HCT116 (cell line): ENCODE measurements at regions of chr12 and their contacts with region 1.

Region 1: GRCh38 chr12:66409195-66409871 is 107.0 kb downstream of the HELB start:
- DNase-seq: peak; percentile 57
- ATAC-seq: peak; percentile 92
- H3K4me3 ChIP-seq: no peak overlapping the region
- H3K27ac ChIP-seq: no peak overlapping the region
- H3K4me1 ChIP-seq: peaks cover 0 to 4% of the 10 kb centered on the region in 2 experiments; a peak in 1 of 4 replicates
- H3K27me3 ChIP-seq: no peaks in the 10 kb centered on the region
- CTCF ChIP-seq: peak; percentile 85 to 92 (median 86)
- POLR2A ChIP-seq: no peak
- RAD21 ChIP-seq: peak; percentile 88

Region 2: DNA sequence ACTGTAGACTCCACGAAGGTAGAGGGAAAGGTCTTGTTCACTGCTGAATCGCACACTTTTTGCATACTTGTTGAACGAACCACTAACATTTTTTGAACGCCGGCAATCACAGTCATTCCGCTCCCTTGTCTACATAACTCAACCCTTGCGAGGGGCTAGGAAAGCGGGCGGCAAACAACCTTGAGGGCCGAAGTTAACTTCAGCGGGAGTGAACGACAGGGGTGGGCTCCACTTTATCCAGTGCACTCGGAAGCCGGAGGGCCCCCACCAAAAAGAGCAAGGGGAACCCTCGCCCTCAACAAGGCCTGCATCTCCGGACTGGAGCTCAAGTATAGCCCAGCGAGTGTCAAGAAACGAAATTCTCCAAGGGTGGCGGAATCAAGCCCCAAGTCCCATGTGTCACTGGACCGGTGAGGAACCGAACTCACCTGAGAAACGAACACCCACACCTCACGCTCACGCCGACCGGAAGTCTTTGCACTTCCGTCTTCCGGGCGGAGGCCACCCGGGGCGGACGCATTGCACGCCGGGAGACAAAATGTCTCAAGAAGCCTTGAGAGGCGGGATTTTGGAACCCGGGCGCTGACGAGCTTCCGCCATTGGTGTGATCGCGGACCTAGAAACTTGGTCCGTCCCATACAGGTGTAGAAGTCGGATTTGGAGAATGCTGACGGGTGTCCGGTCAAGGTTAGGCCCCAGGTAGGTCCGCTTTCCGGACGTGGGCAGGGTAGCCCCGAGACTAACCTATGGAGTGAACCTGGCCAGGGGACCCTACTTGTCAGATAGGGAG is 278.9 kb before region 1 on chr12 and contains the start of gene LLPH:
- CTCF ChIA-PET with region 1: no interaction called
- POLR2A ChIA-PET with region 1: no interaction called
- RAD21 ChIA-PET with region 1: no interaction called
- intact Hi-C with region 1: loop called (anchors 5 kb)
- DNase-seq: peak; percentile 94
- ATAC-seq: peak; percentile 90
- H3K4me3 ChIP-seq: peak within 1 kb of the TSS; percentile 59 to 74
- H3K27ac ChIP-seq: peak within 1 kb of the TSS; percentile 65
- H3K4me1 ChIP-seq: peaks cover 15 to 29% of the 10 kb centered on the region in 2 experiments
- H3K27me3 ChIP-seq: no peaks in the 10 kb centered on the region
- CTCF ChIP-seq: no peak
- POLR2A ChIP-seq: peak; percentile 89
- RAD21 ChIP-seq: no peak
- total RNA-seq, gene LLPH: 45.6 TPM

Region 3: DNA sequence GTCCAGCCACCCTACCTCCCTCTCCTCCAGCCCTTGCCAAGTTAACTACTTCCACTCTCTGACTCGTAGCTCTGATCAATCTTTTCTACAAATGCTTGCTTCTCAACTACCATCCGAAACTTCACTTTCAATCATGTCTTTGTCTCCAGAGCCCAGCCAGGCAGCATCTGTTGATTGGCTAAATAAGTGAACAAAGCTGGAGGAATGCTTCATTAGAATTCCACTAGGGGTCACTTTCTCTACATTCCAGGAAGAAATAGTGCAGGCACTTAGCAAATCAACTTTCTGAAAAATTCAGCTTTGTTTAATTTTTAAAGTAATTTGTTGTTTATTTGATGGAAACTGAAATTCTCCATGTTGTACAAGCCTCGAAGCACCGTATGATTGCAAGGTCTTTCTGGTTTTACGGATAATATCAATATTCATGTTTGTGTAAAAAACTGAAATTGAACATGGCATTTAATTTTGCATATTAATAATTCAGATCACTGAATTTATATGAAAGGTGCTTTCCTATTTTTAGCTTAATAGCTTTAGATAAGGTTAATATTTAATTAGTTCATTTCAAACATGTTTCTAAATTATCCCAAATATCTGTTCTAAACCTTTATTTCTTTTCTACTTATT is 139.5 kb before region 1 on chr12:
- CTCF ChIA-PET with region 1: interaction called, 7 read pairs
- POLR2A ChIA-PET with region 1: no interaction called
- RAD21 ChIA-PET with region 1: no interaction called
- intact Hi-C with region 1: loop called (anchors 2 kb)
- DNase-seq: peak; percentile 45
- ATAC-seq: peak; percentile 90
- H3K4me3 ChIP-seq: no peak overlapping the region
- H3K27ac ChIP-seq: no peak overlapping the region
- H3K4me1 ChIP-seq: no peaks in the 10 kb centered on the region
- H3K27me3 ChIP-seq: no peaks in the 10 kb centered on the region
- CTCF ChIP-seq: peak; percentile 66 to 86 (median 77); a peak in 5 of 6 replicates
- POLR2A ChIP-seq: no peak
- RAD21 ChIP-seq: peak; percentile 71

Region 4: GRCh38 chr12:66279123-66279712 is 130.1 kb before region 1 on chr12:
- CTCF ChIA-PET with region 1: interaction called, 17 read pairs
- POLR2A ChIA-PET with region 1: no interaction called
- RAD21 ChIA-PET with region 1: no interaction called
- intact Hi-C with region 1: loop called (anchors 1 kb)
- DNase-seq: peak; percentile 33
- ATAC-seq: peak; percentile 92
- H3K4me3 ChIP-seq: no peak overlapping the region
- H3K27ac ChIP-seq: no peak overlapping the region
- H3K4me1 ChIP-seq: no peaks in the 10 kb centered on the region
- H3K27me3 ChIP-seq: 0 out of 2 replicates have a peak, but pooled peaks cover 4% of the 10 kb centered on the region
- CTCF ChIP-seq: peak; percentile 81 to 90 (median 89)
- POLR2A ChIP-seq: no peak
- RAD21 ChIP-seq: peak; percentile 74

Region 5: DNA sequence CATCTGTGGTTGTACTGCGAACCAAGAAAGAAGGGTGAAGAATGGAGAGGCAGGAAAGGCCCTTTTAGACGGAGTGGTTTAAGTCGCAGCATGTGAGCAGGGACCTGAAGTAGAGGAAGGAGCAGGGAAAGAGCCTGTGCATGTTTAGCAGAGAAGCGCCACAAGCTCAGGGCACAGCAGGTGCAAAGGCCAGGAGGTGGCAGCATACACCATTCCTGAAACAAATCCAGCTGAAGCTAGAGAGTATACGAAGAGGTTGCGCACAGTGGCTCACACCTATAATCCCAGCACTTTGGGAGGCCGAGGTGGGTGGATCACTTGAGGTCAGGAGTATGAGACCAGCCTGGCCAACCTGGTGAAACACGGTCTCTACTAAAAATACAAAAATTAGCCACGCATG is 57.1 kb before region 1 on chr12:
- CTCF ChIA-PET with region 1: interaction called, 8 read pairs
- POLR2A ChIA-PET with region 1: no interaction called
- RAD21 ChIA-PET with region 1: no interaction called
- intact Hi-C with region 1: loop called (anchors 1 kb)
- DNase-seq: peak; percentile 19
- ATAC-seq: peak; percentile 93
- H3K4me3 ChIP-seq: no peak overlapping the region
- H3K27ac ChIP-seq: no peak overlapping the region
- H3K4me1 ChIP-seq: no peaks in the 10 kb centered on the region
- H3K27me3 ChIP-seq: no peaks in the 10 kb centered on the region
- CTCF ChIP-seq: peak; percentile 52 to 66 (median 63); a peak in 5 of 6 replicates
- POLR2A ChIP-seq: no peak
- RAD21 ChIP-seq: peak; percentile 60